ENCODE measurements at regions of chr14 and their contacts with region 1.

Region 1: DNA sequence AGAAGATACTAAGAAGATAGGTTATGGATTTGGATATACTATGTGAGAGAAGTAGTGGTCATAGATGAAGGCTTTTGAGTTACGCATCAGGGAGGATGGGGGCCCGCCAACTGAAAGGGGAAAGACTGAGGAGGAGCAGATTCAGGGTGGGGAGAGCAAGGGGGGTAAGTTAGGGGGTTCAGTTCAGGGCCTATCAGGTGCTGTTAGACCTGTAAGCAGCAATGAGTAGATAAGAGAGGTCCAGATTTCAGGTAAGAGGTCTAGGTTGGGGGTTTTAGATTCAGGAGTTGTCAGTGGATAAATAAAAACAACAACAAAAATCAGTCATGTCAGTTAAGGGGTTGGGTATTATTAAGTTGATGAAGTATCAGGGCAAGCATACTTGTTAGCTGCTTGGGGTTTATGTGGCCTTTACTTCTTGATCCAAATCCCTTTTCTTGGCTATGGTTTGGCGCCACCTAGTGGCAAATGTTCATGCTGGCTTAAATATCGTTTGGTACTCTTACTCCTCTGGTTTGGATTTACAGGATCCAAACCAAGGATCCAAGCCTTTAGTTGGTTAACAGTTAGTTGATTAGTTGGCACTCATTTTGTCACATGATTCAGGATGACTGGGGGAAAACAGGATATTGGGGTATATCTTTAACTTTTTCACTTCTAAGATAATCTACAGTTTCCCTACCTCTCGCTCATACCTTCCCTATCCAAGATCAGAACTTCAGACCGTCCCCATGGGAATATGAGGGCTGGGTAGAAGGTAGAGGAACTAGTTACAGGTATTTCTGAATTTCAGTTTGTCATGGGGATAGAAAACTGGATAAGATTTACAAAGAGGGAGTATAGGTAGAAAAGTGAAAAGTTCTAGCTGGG is 65.1 kb downstream of the PCNX1 start:
- DNase-seq: peak in 3 of 4 donors; percentile 76 to 89 (median 85)
- ATAC-seq: peak; percentile 95
- H3K4me3 ChIP-seq: no peak overlapping the region
- H3K27ac ChIP-seq: no peak overlapping the region
- H3K4me1 ChIP-seq: peaks cover 0 to 19% of the 10 kb centered on the region in 2 donors
- H3K27me3 ChIP-seq: no peaks in the 10 kb centered on the region
- CTCF ChIP-seq: peak; percentile 78 to 92

Region 2: GRCh38 chr14:70616646-70617045 is 355.7 kb before region 1 on chr14:
- intact Hi-C with region 1: loop called in 1 of 2 experiments (anchors 10 kb)
- DNase-seq: no peak
- ATAC-seq: no peak
- H3K4me3 ChIP-seq: no peak overlapping the region
- H3K27ac ChIP-seq: no peak overlapping the region
- H3K4me1 ChIP-seq: no peaks in the 10 kb centered on the region
- H3K27me3 ChIP-seq: peaks cover 0 to 15% of the 10 kb centered on the region in 2 donors
- CTCF ChIP-seq: no peak

Region 3: DNA sequence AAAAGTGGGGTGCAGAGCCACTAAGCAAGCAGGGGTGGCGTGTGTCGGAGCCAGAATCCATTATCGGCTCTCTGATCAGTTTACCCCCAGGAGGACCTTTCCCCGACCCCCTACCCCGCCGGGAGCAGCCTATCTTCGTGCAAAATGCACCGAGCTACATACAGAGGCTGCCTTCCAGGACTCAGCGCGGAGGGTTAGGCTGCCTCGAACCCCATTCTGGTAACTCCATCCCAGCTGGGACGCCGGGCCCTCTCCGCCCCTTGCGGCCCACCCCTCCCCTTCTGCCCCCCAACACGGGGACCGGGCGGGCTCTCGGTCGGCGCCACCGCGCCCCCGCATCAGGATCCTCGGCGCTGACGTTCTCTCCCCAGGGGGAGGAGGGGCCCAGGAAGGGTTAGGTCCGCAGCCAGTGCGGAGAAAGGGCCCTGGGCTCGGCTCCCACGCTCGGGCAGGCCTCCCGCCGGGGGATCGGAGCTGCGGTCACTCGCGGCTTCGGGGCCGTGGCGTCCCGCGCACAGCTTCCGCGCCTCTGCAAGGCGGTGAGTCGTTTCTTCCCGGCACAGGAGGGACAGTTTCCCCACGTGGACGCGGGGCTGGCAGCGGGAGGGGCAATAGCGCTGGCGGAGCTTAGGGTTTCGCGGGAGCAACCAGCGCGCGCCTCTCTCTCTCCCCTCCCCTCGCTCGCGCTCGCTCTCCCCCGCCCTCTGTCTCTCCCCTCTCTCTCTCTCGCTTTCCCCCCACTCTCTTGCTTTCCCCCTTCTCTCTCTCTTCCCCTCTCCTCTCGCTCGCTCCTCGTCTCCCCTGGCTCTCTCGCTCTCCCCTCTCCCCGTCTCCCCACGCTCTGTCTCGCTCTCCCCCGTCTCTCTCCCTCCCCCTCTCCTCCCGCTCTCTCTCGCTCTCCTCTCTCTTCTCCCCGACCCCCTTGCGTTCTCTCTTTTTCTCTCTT is 150.5 kb before region 1 on chr14:
- intact Hi-C with region 1: loop called in 1 of 2 experiments (anchors 10 kb)
- DNase-seq: peak; percentile 46 to 93 (median 60)
- ATAC-seq: peak; percentile 62
- H3K4me3 ChIP-seq: peak overlapping the region; percentile 56 to 57
- H3K27ac ChIP-seq: peak overlapping the region in 1 of 2 donors; percentile 53
- H3K4me1 ChIP-seq: peaks cover 5 to 31% of the 10 kb centered on the region in 2 donors
- H3K27me3 ChIP-seq: peaks cover 0 to 26% of the 10 kb centered on the region in 2 donors
- CTCF ChIP-seq: no peak

Region 4: DNA sequence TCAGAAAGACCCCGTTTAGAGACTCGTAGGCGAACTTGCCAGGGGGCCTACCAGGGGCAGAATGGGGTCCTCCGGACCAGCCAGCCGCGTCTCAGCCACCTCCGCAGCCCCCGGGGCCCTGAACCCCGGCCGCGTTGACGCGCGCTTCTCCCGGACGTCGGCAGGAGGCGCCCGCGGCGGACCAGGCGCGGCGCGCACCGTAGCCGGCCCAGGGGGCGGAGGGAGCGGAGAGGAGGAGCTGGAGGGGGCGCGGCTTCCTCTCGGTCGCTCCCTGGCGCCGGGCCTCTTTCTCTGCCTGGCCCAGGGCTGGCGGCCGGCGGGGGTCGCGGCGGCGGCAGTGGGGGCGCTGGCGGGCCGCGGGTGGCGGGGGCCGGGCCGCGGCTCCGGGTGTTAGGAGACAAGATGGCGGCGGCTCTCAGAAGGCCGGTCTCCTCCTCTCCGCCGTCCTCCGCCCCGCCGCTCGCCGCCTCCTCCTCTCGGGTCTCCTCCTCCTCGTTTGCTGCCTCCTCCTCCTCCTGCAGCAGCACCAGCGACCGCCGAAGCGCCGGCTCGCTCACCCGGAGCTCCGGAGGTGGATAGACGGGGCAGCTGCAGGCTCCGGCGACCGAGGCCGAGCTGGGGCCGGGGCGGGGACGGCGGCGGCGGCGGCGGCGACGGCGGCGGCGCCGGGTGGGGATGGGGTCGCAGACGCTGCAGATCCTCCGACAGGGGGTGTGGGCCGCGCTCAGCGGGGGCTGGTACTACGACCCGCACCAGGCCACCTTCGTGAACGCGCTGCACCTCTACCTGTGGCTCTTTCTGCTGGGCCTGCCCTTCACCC is 65.0 kb before region 1 on chr14 and contains the start of gene PCNX1:
- intact Hi-C with region 1: loop called in 1 of 2 experiments (anchors 10 kb)
- DNase-seq: peak; percentile 86 to 98 (median 92)
- ATAC-seq: peak; percentile 93
- H3K4me3 ChIP-seq: peak within 1 kb of the TSS; percentile 87 to 100
- H3K27ac ChIP-seq: peak within 1 kb of the TSS; percentile 95 to 96
- H3K4me1 ChIP-seq: peaks cover 5 to 59% of the 10 kb centered on the region in 2 donors
- H3K27me3 ChIP-seq: no peaks in the 10 kb centered on the region
- CTCF ChIP-seq: peak; percentile 81 to 89
- polyA plus RNA-seq, gene PCNX1: 36.9 to 49.7 (median 49.6) TPM